AG04449 (cell line): ENCODE measurements at regions of chr14 and their contacts with region 1.

Region 1: GRCh38 chr14:54175298-54175942 is 218.8 kb upstream of the BMP4 start:
- DNase-seq: no peak
- H3K4me3 ChIP-seq: no peak overlapping the region
- CTCF ChIP-seq: peak; percentile 61

Region 2: GRCh38 chr14:54152351-54152750 is 23.1 kb before region 1 on chr14:
- CTCF ChIA-PET with region 1: interaction called, 14 read pairs
- POLR2A ChIA-PET with region 1: no interaction called
- DNase-seq: no peak
- H3K4me3 ChIP-seq: no peak overlapping the region
- CTCF ChIP-seq: no peak

Region 3: DNA sequence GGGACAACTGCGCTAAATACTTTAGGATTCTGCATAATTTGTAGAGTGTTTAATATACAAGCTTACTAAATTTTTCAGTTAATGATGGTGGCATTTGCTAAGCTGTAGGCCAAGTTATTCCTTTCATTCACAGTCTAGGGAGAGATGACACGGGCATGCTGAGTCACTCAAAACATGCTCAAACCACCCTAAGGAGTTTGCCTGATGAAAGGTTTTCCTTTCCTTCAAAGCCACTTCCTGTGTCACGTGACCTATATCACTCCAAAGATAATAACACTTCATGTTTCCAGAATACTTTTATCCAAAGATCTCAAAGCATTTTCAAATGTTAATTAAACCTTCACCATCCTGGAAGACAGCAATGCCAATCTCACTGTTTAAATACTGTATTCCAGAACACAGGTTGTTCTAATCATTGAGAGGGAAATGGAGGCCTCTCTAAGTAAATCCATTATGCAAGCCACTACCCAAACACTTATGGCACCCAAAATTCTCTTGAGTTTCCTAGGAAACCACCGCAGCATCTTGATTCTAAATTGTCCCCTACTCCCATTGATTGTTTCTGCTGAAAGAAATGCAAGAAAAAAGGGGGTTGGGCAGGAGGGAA is 14.4 kb after region 1 on chr14:
- CTCF ChIA-PET with region 1: interaction called, 76 read pairs
- POLR2A ChIA-PET with region 1: no interaction called
- DNase-seq: no peak
- H3K4me3 ChIP-seq: no peak overlapping the region
- CTCF ChIP-seq: no peak

Region 4: GRCh38 chr14:54220071-54220703 is 44.8 kb after region 1 on chr14:
- CTCF ChIA-PET with region 1: interaction called, 11 read pairs
- POLR2A ChIA-PET with region 1: no interaction called
- DNase-seq: no peak
- H3K4me3 ChIP-seq: peak overlapping the region; percentile 39
- CTCF ChIP-seq: no peak

Region 5: GRCh38 chr14:54329082-54329695 is 153.8 kb after region 1 on chr14:
- CTCF ChIA-PET with region 1: interaction called, 20 read pairs
- POLR2A ChIA-PET with region 1: no interaction called
- DNase-seq: peak; percentile 16
- H3K4me3 ChIP-seq: no peak overlapping the region
- CTCF ChIP-seq: peak; percentile 77